ENCODE measurements at regions of chr12 and their contacts with region 1.

Region 1: DNA sequence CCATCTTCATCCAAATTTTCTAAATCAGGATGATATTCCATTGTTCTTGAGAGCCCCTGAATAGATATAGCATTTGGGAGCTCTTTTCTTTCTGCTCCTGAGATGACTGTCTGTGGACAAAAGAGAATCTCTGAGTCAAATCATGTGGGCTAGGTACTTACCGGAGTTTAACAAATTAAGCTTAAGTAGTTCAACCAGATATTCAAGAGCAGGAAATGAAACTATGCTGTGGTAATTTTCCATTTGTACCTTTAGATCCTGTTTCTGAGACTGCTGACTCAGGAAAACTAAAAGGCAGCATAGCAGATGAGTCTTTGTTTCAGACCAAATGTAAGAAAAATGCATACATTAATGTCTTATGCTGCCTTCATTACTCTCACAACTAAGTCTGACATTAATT is at the start of gene CLEC7A:
- DNase-seq: no peak
- H3K4me3 ChIP-seq: no peak within 1 kb of the TSS
- H3K27ac ChIP-seq: no peak within 1 kb of the TSS
- H3K4me1 ChIP-seq: no peaks in the 10 kb centered on the region
- H3K27me3 ChIP-seq: no peaks in the 10 kb centered on the region
- CTCF ChIP-seq: no peak
- POLR2A ChIP-seq: no peak
- total RNA-seq, gene CLEC7A: 3.4 to 4.6 TPM

Region 2: GRCh38 chr12:9741726-9742125 is 388.3 kb before region 1 on chr12:
- intact Hi-C with region 1: loop called (anchors 10 kb)
- DNase-seq: no peak
- H3K4me3 ChIP-seq: no peak overlapping the region
- H3K27ac ChIP-seq: no peak overlapping the region
- H3K4me1 ChIP-seq: no peaks in the 10 kb centered on the region
- H3K27me3 ChIP-seq: no peaks in the 10 kb centered on the region
- CTCF ChIP-seq: no peak
- POLR2A ChIP-seq: no peak

Region 3: GRCh38 chr12:10033783-10034545 is 96.1 kb before region 1 on chr12:
- intact Hi-C with region 1: loop called (anchors 10 kb)
- DNase-seq: no peak
- H3K4me3 ChIP-seq: no peak overlapping the region
- H3K27ac ChIP-seq: no peak overlapping the region
- H3K4me1 ChIP-seq: no peaks in the 10 kb centered on the region
- H3K27me3 ChIP-seq: no peaks in the 10 kb centered on the region
- CTCF ChIP-seq: peak; percentile 14 to 66 (median 52)
- POLR2A ChIP-seq: no peak

Region 4: DNA sequence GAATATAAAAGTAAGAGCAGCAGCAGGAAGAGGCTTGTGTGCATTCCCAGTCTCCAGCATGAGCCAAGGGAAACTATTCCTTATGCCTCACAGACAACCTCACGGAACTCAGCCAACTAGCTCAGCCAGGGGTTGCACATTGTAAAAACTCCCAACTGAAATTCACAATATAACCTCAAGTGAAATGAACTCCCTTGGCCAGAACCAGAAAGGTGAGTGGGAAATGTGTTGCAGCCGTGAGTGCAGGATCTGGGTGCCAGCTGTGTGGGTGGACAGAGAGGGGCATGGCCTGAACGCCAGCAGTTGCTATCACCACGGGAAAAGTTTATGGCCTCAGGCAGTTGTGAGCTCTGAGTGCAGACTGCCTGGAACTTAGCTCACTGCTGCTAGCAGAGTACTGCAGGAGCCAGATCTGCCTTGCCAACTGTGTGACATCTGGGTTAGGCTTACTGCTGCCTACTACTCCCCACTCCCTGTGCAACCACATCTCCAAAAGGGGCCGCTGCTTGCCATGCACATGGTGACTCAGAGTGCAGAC is 28.9 kb before region 1 on chr12:
- intact Hi-C with region 1: no loop called
- DNase-seq: peak; percentile 55
- H3K4me3 ChIP-seq: no peak overlapping the region
- H3K27ac ChIP-seq: peak overlapping the region in 1 of 2 donors; percentile 38
- H3K4me1 ChIP-seq: no peaks in the 10 kb centered on the region
- H3K27me3 ChIP-seq: no peaks in the 10 kb centered on the region
- CTCF ChIP-seq: no peak
- POLR2A ChIP-seq: no peak

Measured in prostate gland (tissue), 2 donors.